Cardiac septum (tissue), 1 donor: ENCODE measurements at regions of chr5 and their contacts with region 1.

Region 1: GRCh38 chr5:42950440-42951292 is 89.5 kb downstream of the ANXA2R start:
- DNase-seq: peak; percentile 88

Region 2: DNA sequence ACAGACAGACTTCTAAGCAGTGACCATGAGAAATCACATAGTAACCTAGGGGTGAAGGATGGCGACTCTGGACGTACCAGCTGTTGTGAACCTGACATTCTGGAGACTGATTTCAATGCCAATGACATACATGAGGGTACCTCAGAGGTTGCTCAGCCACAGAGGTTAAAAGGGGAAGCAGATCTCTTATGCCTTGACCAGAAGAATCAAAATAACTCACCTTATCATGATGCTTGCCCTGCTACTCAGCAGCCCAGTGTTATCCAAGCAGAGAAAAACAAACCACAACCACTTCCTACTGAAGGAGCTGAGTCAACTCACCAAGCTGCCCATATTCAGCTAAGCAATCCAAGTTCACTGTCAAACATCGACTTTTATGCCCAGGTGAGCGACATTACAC is 232.1 kb before region 1 on chr5:
- intact Hi-C with region 1: no loop called
- DNase-seq: no peak

Region 3: DNA sequence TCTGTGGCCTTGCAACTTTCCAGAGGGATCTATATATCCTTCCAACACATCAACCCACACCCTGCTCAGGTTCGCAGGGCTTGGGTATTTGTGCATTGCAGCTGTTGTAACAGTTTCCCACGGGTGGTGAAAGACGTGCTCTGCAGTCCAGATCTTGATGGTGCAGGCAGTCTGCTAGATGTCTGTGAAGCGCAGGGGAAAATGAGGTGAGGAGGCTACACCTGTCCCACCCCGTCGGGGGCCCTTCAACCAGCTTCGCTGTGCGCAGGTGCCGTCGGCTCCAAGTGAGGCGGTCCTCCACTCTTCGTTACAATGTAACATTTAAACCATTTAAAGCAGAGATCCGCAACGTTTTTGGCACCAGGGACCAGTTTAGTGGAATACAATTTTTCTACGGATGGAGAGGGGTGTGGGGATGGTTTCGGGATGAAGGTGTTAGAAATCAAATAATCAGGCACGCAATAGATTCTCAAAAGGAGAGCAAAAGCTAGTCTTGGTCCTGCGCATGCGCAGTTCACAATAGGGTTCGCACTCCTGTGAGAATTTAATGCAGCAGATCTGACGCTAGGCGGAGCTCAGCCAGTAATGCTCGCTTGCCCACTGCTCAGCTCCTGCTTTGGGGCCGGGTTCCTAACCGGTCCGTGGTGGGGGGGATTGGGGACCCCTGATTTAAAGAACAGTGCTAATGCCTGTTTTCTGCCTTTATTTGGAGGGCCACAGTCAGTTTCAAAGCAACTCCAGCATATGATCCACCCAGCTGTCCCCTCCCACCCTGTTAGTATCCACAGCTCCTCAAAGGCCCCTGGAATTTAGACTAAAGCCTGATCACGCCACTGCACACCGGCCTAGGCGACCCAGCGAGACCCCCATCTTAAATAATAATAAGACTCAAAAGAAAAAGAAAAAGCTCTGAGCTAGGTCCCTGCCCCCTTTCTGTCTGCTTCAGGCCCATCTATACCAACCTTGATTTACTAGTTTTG is 41.9 kb before region 1 on chr5:
- intact Hi-C with region 1: loop called (anchors 5 kb)
- DNase-seq: peak; percentile 95

Region 4: GRCh38 chr5:43008369-43009153 is 57.9 kb after region 1 on chr5:
- intact Hi-C with region 1: loop called (anchors 5 kb)
- DNase-seq: peak; percentile 91

Region 5: DNA sequence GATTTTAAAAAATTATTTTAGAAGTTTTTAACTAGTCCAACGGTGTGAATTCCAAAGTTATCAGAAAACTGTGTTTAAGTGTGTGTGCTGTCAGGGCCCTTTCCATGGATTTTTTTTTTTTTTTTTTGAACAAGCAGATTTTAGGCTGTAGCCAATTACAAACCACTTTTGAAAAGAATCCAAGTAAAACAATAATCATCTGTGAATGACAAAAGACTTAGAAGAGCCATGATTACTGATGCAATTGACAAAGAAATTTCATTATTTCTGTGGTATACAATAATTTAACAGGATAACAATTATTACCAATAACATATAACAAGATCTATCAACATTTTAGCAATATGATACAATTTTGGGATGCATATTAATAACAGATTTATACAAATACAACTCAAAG is 622.4 kb after region 1 on chr5:
- intact Hi-C with region 1: no loop called
- DNase-seq: no peak